GM12878 (cell line): ENCODE measurements at regions of chr6 and their contacts with region 1.

Region 1: DNA sequence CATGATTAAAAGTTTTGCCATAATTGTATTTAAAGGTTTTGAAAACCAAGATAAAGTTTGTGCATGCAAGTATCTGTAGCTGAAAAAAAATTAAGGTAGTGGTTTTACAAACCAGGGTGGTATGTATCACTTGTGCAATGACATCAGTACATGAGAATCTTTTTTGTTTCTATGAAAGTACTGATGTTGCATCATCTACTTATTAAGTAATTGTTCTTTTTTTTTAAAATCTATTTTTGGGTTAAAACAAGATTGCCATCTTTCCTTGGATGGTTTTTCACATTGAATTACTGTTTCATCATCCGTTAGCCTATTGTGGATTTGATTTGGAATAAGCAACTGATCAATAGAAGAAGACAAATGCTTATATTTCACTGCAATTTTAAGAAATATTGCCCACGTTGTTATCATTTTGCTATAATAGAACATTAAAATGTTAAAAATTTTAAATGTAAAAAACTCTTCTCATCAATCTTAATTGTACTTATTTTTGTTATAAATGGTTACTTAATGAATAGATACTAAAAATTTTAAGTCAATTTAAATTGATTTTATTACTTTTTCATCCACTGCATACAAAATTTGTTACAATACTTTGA is 39.8 kb upstream of the TAGAP start:
- DNase-seq: no peak
- ATAC-seq: peak; percentile 46; the same call in 2 of the 3 replicates
- H3K4me3 ChIP-seq: no peak overlapping the region
- H3K27ac ChIP-seq: no peak overlapping the region
- H3K4me1 ChIP-seq: peaks cover 4% of the 10 kb centered on the region; the same call in 1 of the 2 replicates
- H3K27me3 ChIP-seq: no peaks in the 10 kb centered on the region
- CTCF ChIP-seq: no peak
- EP300 ChIP-seq: no peak
- POLR2A ChIP-seq: no peak
- RAD21 ChIP-seq: no peak

Region 2: GRCh38 chr6:159098636-159099106 is 14.1 kb after region 1 on chr6:
- CTCF ChIA-PET with region 1: interaction called, 20 read pairs
- POLR2A ChIA-PET with region 1: interaction called, 14 read pairs
- RAD21 ChIA-PET with region 1: interaction called, 35 read pairs
- SMC1A ChIA-PET with region 1: interaction called, 44 read pairs
- in situ Hi-C with region 1: no loop called
- intact Hi-C with region 1: no loop called
- DNase-seq: no peak
- ATAC-seq: peak; percentile 52
- H3K4me3 ChIP-seq: no peak overlapping the region
- H3K27ac ChIP-seq: no peak overlapping the region
- H3K4me1 ChIP-seq: peaks cover 16% of the 10 kb centered on the region
- H3K27me3 ChIP-seq: no peaks in the 10 kb centered on the region
- CTCF ChIP-seq: no peak
- EP300 ChIP-seq: peak in 1 of 2 experiments; percentile 44; a peak in 1 of 4 replicates
- POLR2A ChIP-seq: no peak
- RAD21 ChIP-seq: no peak